Caco-2 (cell line): ENCODE measurements at regions of chr3 and their contacts with region 1.

Region 1: DNA sequence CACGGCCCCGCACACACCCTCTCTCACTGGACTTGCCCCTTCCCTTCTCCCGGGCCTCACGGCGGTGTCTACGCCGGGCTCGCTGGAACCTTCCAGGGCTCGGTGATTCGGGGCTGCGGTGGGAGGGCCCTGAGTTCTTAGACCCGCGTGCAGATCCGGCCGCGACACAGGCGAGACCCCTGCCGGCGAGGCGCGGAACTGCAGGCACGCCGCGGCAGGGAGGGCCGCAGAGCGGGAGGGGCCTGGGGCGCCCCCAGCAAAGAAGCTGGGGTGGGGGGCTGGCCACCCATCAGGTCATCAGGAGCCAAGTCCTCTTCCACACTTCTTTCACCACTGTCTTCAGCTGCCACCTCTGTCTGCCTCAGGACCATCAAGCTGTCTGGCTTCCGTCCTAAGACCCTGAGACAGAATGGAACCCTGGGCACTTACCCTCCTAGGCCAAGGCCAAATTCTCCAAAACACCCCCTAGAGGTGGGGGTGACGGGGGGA is 164.5 kb downstream of the XXYLT1 start:
- DNase-seq: peak in 1 of 2 experiments; percentile 66
- H3K4me3 ChIP-seq: no peak overlapping the region
- H3K4me3 Mint-ChIP-seq: peak overlapping the region; percentile 60
- H3K27ac Mint-ChIP-seq: peak overlapping the region; percentile 49
- H3K4me1 ChIP-seq: peaks cover 36% of the 10 kb centered on the region
- H3K4me1 Mint-ChIP-seq: peaks cover 33% of the 10 kb centered on the region
- H3K27me3 ChIP-seq: no peaks in the 10 kb centered on the region
- H3K27me3 Mint-ChIP-seq: no peaks in the 10 kb centered on the region
- CTCF ChIP-seq: peak; percentile 72 to 88

Region 2: DNA sequence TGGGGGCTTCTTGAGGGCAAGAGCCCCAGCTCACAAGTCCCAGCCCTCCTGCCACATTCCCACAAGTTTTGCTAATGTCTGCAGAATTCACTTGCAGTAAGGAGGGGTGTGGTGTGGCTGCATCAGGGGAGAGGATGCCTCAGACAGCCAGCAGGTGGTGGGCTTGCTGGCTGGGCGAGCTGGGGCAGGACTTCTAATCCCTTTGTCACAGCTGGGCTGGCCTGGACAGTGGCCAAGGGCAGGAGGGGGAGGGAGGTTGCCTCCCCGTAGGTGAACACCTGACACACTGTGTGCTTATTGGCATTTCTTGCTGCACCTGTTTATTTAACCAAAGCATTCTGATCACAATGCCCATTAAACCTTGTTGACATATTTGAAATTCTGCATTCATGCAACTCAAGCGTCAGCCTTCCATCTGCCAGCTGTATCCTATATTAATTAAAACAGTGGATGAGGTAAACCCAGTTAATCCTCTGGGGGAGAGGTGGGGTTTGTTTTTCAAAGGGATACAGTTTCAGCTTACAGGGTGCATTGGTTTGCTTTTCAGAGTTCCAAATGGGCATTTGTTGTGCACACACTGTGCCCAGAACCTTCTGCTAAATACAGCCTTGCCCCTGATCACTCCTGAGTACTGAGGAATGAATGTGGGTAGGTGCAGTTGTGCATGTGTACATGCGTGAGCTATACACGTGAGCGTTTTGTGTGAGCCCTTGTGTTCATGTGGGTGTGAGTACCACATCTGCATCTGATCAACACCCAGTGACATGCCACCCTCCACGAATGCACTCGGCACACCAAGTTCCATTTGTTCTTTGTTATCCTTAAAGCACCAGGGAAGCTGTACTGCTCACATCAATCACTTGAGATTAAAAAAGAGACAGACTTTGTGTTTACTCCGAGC is 104.3 kb before region 1 on chr3:
- CTCF ChIA-PET with region 1: interaction called, 5 read pairs
- POLR2A ChIA-PET with region 1: no interaction called
- intact Hi-C with region 1: loop called (anchors 1 kb)
- DNase-seq: peak; percentile 73 to 74
- H3K4me3 ChIP-seq: no peak overlapping the region
- H3K4me3 Mint-ChIP-seq: no peak overlapping the region
- H3K27ac Mint-ChIP-seq: no peak overlapping the region
- H3K4me1 ChIP-seq: peaks cover 6% of the 10 kb centered on the region; the same call in 1 of the 2 replicates
- H3K4me1 Mint-ChIP-seq: no peaks in the 10 kb centered on the region
- H3K27me3 ChIP-seq: no peaks in the 10 kb centered on the region
- H3K27me3 Mint-ChIP-seq: no peaks in the 10 kb centered on the region
- CTCF ChIP-seq: peak; percentile 41 to 85

Region 3: GRCh38 chr3:195030791-195031321 is 75.6 kb before region 1 on chr3:
- CTCF ChIA-PET with region 1: no interaction called
- POLR2A ChIA-PET with region 1: no interaction called
- intact Hi-C with region 1: loop called (anchors 5 kb)
- DNase-seq: peak; percentile 53 to 72
- H3K4me3 ChIP-seq: no peak overlapping the region
- H3K4me3 Mint-ChIP-seq: no peak overlapping the region
- H3K27ac Mint-ChIP-seq: peak overlapping the region; percentile 39
- H3K4me1 ChIP-seq: peaks cover 47% of the 10 kb centered on the region
- H3K4me1 Mint-ChIP-seq: peaks cover 26% of the 10 kb centered on the region
- H3K27me3 ChIP-seq: no peaks in the 10 kb centered on the region
- H3K27me3 Mint-ChIP-seq: no peaks in the 10 kb centered on the region
- CTCF ChIP-seq: no peak

Region 4: DNA sequence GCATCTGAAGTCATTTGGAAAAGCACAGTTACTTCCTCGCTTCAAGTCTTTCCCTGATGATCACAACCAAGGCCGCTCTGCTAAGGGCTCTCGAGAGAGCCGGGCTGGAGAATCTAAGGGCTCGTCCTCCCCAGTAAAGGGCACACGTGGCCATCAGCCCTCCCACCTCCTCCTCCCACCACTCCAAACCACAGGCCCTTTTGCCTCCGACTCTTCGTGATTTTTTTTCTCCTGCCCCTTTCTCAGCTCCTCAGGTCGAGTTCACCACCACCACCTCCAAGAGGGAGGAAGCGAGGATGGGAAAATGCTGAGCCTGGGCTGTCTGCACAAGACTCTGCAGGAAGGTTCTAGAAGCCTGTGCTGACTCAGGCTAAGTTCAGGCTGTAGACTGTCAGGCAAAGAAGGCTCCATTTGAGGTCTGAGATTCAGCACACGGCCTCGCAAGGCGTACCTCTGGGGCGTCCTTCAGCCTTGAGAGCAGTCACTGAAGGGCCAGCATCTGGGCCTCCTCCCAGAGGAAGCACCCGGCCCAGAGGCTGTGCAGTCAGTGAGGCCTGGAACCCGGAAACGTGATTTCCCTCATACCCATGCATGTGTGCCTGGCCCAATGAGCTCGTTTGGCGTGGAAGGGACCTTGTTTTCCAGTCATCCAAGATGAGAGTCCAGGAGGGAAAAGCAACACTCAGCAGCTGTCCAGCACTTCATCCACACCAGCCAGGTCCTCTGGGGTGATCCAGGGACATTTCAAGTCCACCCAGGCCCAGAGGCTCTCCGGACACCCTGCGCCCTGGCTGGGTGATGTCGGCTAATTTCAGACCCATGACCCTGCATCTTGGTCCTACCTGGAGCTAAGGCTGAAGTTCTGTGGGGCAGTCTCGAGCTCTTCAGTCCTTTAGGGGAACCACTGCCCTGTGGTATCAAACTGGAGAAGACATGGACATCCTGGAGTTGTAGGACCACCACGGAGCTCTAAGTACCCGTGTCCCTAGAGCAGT is 32.3 kb before region 1 on chr3:
- CTCF ChIA-PET with region 1: no interaction called
- POLR2A ChIA-PET with region 1: no interaction called
- intact Hi-C with region 1: loop called (anchors 1 kb)
- DNase-seq: peak in 1 of 2 experiments; percentile 20
- H3K4me3 ChIP-seq: no peak overlapping the region
- H3K4me3 Mint-ChIP-seq: no peak overlapping the region
- H3K27ac Mint-ChIP-seq: no peak overlapping the region
- H3K4me1 ChIP-seq: peaks cover 41% of the 10 kb centered on the region
- H3K4me1 Mint-ChIP-seq: peaks cover 29% of the 10 kb centered on the region
- H3K27me3 ChIP-seq: no peaks in the 10 kb centered on the region
- H3K27me3 Mint-ChIP-seq: no peaks in the 10 kb centered on the region
- CTCF ChIP-seq: no peak